AG04450 (cell line): ENCODE measurements at regions of chr12 and their contacts with region 1.

Region 1: DNA sequence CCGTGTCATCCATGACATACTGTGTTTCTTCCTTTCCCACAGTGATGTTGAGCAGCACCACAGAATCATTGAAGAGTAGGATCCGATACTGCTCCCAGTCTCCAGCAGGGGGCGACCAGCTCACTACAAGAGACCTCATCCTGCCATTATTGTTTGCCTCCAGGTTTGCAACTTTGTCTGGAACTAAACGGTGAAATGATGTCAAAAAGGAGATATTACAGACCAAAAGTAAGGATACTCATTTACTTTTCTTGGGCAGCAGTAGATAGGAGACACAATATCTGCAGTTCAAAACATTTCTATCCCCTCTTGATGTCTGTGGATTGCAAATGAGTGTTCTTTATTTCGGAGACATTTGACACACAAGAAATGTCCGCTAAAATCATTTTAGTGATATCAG is 47.2 kb downstream of the PTPRB start:
- DNase-seq: peak; percentile 41
- H3K4me3 ChIP-seq: no peak overlapping the region
- H3K27ac ChIP-seq: no peak overlapping the region
- H3K27me3 ChIP-seq: no peaks in the 10 kb centered on the region
- CTCF ChIP-seq: peak; percentile 90

Region 2: DNA sequence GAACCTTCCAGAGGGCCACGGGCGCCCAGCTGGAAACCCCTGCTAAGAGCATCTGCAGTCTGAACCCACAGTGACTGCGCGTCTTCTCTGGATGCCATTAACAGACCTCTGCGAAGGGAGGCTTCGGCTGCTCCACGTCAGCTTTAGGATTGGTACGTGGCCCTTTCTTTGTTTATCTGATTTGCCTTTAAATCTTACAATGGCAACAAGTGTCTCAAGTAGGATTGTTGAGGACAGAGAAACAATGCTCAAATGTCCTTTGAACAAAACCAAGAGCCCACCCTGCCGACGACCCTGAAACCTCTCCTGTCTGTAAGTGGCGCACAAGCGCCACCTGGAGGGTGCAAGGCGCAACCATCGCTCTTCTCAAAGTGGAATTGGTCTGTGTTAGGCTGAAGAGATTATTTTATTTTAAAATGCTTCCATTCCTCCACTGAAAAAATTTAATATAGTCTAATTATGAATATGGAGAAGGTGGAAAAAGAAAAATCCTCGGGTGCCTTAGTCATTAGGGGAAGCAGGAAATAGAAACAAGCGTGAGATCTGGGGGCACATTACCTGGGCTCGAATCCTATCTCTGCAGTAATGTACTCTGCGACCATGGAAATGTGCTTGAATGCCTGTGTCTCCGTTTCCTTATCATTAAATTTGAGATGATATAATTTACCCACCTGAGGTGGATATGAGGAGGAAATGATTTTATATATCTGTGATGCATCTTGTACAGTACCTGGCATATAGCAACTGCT is 129.8 kb after region 1 on chr12:
- CTCF ChIA-PET with region 1: interaction called, 25 read pairs
- POLR2A ChIA-PET with region 1: interaction called, 3 read pairs
- DNase-seq: no peak
- H3K4me3 ChIP-seq: peak overlapping the region; percentile 37; the same call in 1 of the 2 replicates
- H3K27ac ChIP-seq: no peak overlapping the region
- H3K27me3 ChIP-seq: no peaks in the 10 kb centered on the region
- CTCF ChIP-seq: peak; percentile 98